Activated naive CD4-positive, alpha-beta T cell treated with anti-CD3 and anti-CD28 coated beads for 36 hours (primary cell): ENCODE measurements at regions of chr18 and their contacts with region 1.

Region 1: DNA sequence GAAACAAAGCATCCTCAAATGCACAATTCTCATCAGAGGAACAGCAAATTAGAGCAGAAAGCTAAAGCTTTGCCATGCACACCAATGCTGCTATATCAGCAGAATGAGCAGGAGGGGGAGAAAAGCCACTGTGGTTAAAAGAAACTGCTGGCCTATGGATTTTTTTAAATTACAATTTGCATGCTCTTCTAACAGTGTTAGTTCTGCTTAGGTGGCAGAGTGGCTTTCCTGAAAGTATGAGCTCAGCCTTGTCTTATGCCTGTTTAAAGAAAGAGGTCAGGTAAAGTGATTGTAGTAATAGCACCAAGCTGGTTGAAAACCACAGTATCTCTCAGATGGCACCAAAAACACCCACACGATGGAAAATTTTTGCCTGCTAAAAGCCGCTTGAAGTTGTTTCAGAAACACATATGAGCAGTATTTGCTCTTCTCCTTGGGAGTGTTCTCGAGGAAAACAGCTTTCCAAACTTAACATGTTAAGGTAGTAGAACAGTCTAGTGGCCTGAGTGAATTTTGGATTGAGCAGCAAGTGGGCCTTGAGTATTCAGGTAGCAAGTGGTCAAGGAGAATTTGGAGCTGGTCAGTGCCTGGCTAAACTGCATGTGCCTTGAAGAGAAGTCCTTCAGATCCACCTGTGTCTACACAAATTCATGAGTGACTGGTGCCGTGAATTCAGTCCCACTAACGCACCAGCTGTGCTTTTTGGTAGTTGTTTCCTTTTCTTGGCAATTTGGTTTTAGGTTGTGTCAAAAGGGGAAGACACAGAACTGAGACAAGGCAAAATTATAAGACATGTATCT is 19.6 kb upstream of the NDUFV2 start:
- DNase-seq: peak; percentile 82
- H3K4me3 Mint-ChIP-seq: peak overlapping the region; percentile 67
- H3K27ac Mint-ChIP-seq: peak overlapping the region; percentile 92
- H3K4me1 Mint-ChIP-seq: peaks cover 30% of the 10 kb centered on the region
- H3K27me3 Mint-ChIP-seq: no peaks in the 10 kb centered on the region

Region 2: DNA sequence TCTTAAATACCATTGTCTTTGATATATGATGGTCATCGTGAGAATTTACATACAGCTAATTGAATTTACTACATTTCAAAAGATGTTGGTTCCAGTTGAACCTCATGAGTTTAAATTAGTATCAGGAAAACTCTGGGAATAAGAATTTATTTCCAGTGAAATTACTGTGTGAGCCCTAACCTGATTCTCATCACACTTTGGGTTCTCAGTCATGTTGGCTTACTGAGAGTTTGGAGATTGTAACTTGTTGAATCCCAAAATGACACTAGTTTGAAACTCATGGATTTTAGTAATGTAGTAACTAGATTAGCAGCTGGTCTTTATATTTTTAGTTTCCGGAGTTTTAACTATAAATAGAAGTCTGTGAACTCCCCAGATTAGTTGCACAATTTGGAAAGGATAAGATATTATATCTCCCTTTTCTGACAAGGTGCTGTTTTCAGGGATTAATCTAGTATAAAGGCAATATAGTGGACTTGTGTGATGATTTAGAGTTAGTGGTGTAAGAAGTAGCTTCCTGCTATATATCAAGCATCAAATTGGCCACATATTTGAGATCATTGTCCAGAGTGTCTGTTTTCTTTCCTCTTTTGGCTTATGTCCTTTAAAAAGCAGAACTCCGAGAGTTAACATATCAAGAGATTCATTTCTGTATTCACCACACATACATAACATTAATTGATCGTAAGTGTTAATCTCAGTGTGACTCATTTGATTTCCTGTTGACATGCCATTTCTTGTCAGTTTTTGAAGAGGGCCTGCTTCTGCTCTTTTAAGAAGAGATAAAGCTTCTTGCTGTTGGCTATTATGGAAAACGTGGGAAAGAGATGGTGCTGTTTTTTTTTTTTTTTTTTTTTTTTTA is 35.3 kb after region 1 on chr18:
- CTCF ChIA-PET with region 1: interaction called, 20 read pairs
- intact Hi-C with region 1: loop called (anchors 1 kb)
- DNase-seq: no peak
- H3K4me3 Mint-ChIP-seq: peak overlapping the region; percentile 57
- H3K27ac Mint-ChIP-seq: peak overlapping the region; percentile 98
- H3K4me1 Mint-ChIP-seq: peaks cover 81% of the 10 kb centered on the region
- H3K27me3 Mint-ChIP-seq: no peaks in the 10 kb centered on the region